Tibial artery (tissue), 4 donors: ENCODE measurements at regions of chr12 and their contacts with region 1.

Region 1: DNA sequence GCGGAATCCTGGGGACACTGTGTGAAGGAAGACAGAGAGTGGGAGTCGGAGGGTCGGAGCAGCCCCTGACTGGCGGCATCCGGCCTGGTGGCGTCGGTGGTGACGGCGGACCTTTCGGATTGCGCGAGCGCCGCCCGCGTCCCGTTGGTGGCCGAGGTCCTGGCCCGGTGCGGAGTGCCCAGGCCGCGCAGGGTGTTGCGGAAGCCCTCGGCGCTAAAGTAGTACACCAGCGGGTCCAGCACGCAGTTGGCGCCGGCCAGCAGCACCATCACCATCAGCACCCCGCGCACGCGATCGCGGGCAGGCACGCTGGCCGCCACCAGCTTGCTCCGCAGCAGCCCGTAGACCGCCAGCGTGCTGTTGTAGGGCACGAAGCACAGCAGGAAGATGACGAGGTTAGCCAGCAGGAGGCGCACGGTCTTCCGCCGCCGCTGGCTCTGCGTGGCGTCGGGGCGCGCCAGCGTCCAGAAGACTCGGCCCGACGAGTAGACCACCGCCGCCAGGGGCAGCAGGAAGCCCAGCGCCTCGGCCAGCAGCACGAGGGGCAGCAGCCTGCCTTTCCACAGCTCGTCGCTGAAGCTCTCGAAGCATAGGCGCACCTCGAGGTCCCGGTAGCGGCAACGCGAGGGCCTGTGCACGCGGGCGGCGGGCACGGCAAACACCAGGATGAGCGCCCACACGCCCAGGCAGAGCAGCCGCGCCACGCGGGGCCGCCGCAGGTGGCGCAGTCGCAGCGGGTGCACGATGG is 13.1 kb upstream of the CHD4 start:
- DNase-seq: no peak
- H3K4me3 ChIP-seq: peak overlapping the region in 1 of 2 donors; percentile 8
- H3K27ac ChIP-seq: no peak overlapping the region
- H3K4me1 ChIP-seq: peaks cover 0 to 8% (median 3%) of the 10 kb centered on the region in 4 donors
- H3K27me3 ChIP-seq: peaks cover 0 to 18% of the 10 kb centered on the region in 2 donors
- CTCF ChIP-seq: peak; percentile 33 to 37

Region 2: GRCh38 chr12:6643569-6644256 is 23.4 kb after region 1 on chr12:
- intact Hi-C with region 1: loop called (anchors 2 kb)
- DNase-seq: peak in 1 of 2 donors; percentile 24
- H3K4me3 ChIP-seq: no peak overlapping the region
- H3K27ac ChIP-seq: no peak overlapping the region
- H3K4me1 ChIP-seq: peaks cover 0 to 14% (median 5%) of the 10 kb centered on the region in 4 donors
- H3K27me3 ChIP-seq: peaks cover 0 to 3% of the 10 kb centered on the region in 2 donors
- CTCF ChIP-seq: no peak

Region 3: GRCh38 chr12:6752921-6753771 is 132.8 kb after region 1 on chr12 and contains the start of gene MLF2:
- intact Hi-C with region 1: no loop called
- DNase-seq: peak; percentile 98 to 100
- H3K4me3 ChIP-seq: peak within 1 kb of the TSS; percentile 83 to 98
- H3K27ac ChIP-seq: peak within 1 kb of the TSS; percentile 98
- H3K4me1 ChIP-seq: peaks cover 0 to 19% (median 13%) of the 10 kb centered on the region in 4 donors
- H3K27me3 ChIP-seq: no peaks in the 10 kb centered on the region
- CTCF ChIP-seq: peak in 1 of 2 experiments; percentile 94